ENCODE measurements at regions of chr11 and their contacts with region 1.

Region 1: GRCh38 chr11:59197991-59198390 is 14.7 kb downstream of the MPEG1 start:
- DNase-seq: no peak
- H3K4me3 ChIP-seq: no peak overlapping the region
- H3K27ac ChIP-seq: no peak overlapping the region
- H3K4me1 ChIP-seq: peaks cover 0 to 6% of the 10 kb centered on the region in 2 experiments; a peak in 1 of 4 replicates
- H3K27me3 ChIP-seq: 0 out of 2 replicates have a peak, but pooled peaks cover 9% of the 10 kb centered on the region
- CTCF ChIP-seq: no peak
- EP300 ChIP-seq: no peak
- RAD21 ChIP-seq: no peak

Region 2: DNA sequence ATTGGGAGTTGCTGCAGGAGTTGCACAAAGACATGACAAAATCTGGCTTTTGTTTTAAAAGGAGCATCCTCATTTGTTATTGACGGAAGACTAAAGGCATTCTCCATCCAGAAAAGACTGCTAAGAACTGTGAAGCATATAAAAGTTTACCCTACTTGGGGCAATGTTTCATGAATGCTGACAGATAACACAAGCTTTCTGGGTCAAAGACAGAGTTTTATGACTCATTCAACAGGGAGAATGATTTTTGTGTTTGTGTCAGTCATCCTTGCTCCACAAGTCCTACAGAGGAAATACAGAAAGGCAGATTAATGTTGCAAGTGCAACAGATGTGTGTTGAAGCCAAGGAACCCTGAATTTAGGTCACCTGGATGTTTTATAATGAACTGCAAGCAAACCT is 256.2 kb before region 1 on chr11:
- CTCF ChIA-PET with region 1: no interaction called
- POLR2A ChIA-PET with region 1: no interaction called
- DNase-seq: no peak
- H3K4me3 ChIP-seq: no peak overlapping the region
- H3K27ac ChIP-seq: no peak overlapping the region
- H3K4me1 ChIP-seq: no peaks in the 10 kb centered on the region
- H3K27me3 ChIP-seq: no peaks in the 10 kb centered on the region
- CTCF ChIP-seq: no peak
- EP300 ChIP-seq: no peak
- RAD21 ChIP-seq: no peak

Region 3: GRCh38 chr11:59102259-59102765 is 95.7 kb before region 1 on chr11:
- CTCF ChIA-PET with region 1: no interaction called
- POLR2A ChIA-PET with region 1: no interaction called
- DNase-seq: no peak
- H3K4me3 ChIP-seq: no peak overlapping the region
- H3K27ac ChIP-seq: no peak overlapping the region
- H3K4me1 ChIP-seq: peaks cover 0 to 6% of the 10 kb centered on the region in 2 experiments; a peak in 1 of 4 replicates
- H3K27me3 ChIP-seq: peaks cover 3% of the 10 kb centered on the region; the same call in 1 of the 2 replicates
- CTCF ChIP-seq: no peak
- EP300 ChIP-seq: no peak
- RAD21 ChIP-seq: no peak

Region 4: DNA sequence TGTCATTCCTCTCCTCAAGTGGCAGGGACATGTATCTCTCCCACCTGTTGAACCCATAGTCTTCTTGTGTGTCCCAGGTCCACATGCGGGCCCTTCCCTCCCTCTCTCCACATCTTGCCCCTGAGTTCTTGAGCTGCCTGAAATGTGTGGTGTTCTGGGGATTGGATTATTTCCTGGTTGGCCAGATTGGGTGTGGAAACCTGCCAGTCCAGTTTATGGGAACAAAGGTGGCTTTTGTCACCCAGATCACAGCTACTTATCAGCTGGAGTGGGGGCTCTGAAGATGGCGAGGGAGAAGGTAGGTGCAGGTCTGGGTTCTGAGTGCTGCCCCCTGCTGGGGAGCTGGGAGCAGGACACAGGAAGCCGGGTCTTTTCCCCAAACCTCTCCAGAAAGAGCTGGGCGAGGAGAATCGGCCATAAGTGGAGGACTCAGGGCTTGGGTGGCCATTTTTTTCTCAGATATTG is 11.8 kb before region 1 on chr11:
- CTCF ChIA-PET with region 1: interaction called, 17 read pairs
- POLR2A ChIA-PET with region 1: no interaction called
- DNase-seq: peak; percentile 68
- H3K4me3 ChIP-seq: no peak overlapping the region; a peak in 1 of 4 replicates
- H3K27ac ChIP-seq: no peak overlapping the region
- H3K4me1 ChIP-seq: no peaks in the 10 kb centered on the region
- H3K27me3 ChIP-seq: peaks cover 5% of the 10 kb centered on the region; the same call in 1 of the 2 replicates
- CTCF ChIP-seq: peak; percentile 59
- EP300 ChIP-seq: no peak
- RAD21 ChIP-seq: no peak